MCF 10A (cell line): ENCODE measurements at regions of chr9 and their contacts with region 1.

Region 1: DNA sequence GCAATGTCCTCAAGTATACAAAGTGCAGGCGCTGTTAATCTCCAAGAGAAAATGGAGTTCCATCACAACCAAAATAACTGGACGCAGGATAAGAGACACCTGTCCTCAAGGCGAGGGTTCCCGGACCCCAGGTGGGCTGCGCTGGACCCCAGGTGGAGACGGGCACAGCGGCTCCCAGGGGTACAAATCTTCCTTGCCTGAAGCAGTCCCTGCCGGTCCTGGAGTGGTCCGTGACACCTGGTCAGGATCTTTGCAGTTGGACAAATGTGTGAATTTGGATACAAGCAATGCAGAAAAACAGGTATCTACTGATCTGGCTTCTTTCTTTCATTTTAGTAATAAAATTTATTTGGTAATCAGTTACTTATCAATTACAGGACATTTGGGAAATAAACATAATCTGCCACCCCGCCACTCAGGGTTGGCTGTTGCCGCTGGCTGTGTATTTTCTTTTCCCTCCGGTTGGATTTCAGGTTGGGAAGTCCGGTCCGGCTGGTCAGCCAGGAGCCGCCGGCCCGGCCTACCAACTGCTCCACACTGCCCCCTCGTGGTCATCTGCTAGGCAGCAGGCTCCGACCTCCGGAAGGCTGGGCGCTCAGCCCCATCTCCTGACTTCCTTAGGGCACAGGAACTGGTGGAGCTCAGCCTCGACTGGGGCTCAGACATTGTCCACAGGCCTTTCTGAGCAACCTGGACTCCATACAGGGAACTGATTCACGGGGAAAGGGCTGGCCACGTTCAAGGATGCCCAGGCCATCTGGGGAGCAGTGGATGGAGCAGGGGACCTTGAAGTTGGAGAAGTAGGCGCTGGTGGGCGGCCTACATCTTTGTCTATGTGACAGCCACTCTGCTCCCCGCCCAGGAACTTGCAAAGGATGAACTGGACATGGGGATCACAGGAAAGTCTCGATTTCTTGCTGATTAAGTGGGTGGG is 43.4 kb downstream of the NXNL2 start:
- DNase-seq: peak; percentile 79
- H3K4me3 Mint-ChIP-seq: peak overlapping the region; percentile 61
- H3K27ac Mint-ChIP-seq: no peak overlapping the region
- H3K4me1 Mint-ChIP-seq: peaks cover 21% of the 10 kb centered on the region
- H3K27me3 Mint-ChIP-seq: no peaks in the 10 kb centered on the region
- CTCF ChIP-seq: peak; percentile 89

Region 2: DNA sequence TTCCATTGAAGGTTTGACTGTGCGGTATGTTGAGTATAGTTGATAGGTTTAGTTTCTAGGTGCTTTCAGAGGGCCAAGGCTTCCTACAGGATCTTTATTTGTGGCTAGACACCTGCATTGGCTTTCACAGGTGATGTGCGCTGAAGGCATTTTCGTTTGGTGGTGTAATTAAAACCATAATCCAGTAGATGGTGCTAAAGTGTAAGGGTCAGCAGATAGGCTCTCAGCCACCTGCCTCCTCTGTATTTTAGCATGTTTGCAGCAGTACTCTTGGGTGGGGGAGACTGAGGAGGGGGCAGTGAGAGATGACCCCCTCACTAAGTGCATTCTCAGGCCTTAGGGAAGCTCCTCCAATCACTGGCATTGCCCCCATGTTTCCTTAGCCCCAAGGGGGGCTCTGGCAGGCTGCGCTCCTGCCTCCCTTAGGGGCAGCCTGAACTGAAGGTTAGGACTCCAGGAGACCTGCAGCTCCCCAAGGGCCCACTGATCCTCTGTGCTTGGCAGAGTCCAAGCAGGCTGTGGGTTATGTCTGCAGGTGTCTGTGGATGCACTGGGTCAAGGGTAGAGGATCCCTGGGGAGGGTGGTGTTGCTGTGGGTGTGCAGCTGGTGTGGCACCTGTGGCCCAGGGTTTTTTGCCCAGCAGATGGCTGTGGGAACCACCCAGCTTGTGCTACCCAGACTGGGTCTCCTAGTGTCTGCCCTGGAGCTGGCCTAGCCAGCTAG is 627.5 kb before region 1 on chr9:
- CTCF ChIA-PET with region 1: interaction called, 21 read pairs
- POLR2A ChIA-PET with region 1: no interaction called
- intact Hi-C with region 1: loop called (anchors 2 kb)
- DNase-seq: peak; percentile 56
- H3K4me3 Mint-ChIP-seq: no peak overlapping the region
- H3K27ac Mint-ChIP-seq: no peak overlapping the region
- H3K4me1 Mint-ChIP-seq: no peaks in the 10 kb centered on the region
- H3K27me3 Mint-ChIP-seq: no peaks in the 10 kb centered on the region
- CTCF ChIP-seq: peak; percentile 75

Region 3: DNA sequence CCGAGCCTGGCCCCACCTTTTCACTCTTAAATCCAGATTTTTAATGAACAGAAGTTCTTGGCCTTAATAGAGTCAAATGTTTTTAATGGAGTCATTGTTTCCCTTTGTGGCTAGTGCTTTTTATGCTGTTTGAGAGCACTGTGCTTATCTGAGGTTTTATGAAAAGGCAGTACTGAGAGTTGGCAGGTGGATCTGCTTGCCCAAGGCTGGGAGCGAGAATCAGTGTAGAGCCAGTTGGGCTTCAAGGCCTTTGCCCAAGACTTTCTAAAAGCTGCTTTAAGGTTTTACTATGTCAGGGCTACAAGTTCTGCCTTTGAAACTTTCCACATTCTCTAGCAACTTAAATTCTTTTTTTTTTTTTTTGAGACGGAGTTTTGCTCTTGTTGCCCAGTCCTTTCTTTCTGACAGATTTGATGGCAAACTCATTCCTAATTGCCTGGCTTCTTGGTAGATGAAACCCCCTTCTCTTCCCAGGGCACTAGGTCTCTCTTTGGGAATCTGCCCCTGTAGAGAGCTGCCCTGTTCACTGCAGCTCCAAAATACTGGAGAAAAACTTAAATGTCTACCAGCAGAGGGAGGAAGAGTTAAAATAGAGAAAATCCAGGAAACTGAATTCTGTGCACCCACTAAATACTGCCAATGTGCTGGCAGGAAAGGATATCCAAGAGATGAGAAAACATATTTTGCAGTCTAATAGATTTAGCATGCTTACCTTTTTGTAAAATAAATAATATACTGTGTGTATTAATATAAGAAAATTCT is 567.2 kb before region 1 on chr9:
- CTCF ChIA-PET with region 1: no interaction called
- POLR2A ChIA-PET with region 1: no interaction called
- intact Hi-C with region 1: loop called (anchors 5 kb)
- DNase-seq: peak; percentile 23
- H3K4me3 Mint-ChIP-seq: no peak overlapping the region
- H3K27ac Mint-ChIP-seq: no peak overlapping the region
- H3K4me1 Mint-ChIP-seq: no peaks in the 10 kb centered on the region
- H3K27me3 Mint-ChIP-seq: no peaks in the 10 kb centered on the region
- CTCF ChIP-seq: peak; percentile 31

Region 4: GRCh38 chr9:88106491-88106890 is 471.9 kb before region 1 on chr9:
- CTCF ChIA-PET with region 1: interaction called, 6 read pairs
- POLR2A ChIA-PET with region 1: no interaction called
- intact Hi-C with region 1: loop called (anchors 1 kb)
- DNase-seq: peak; percentile 54
- H3K4me3 Mint-ChIP-seq: no peak overlapping the region
- H3K27ac Mint-ChIP-seq: no peak overlapping the region
- H3K4me1 Mint-ChIP-seq: no peaks in the 10 kb centered on the region
- H3K27me3 Mint-ChIP-seq: peaks cover 10% of the 10 kb centered on the region
- CTCF ChIP-seq: peak; percentile 51

Region 5: GRCh38 chr9:88173378-88173999 is 404.9 kb before region 1 on chr9:
- CTCF ChIA-PET with region 1: no interaction called
- POLR2A ChIA-PET with region 1: no interaction called
- intact Hi-C with region 1: loop called (anchors 1 kb)
- DNase-seq: peak; percentile 87
- H3K4me3 Mint-ChIP-seq: no peak overlapping the region
- H3K27ac Mint-ChIP-seq: no peak overlapping the region
- H3K4me1 Mint-ChIP-seq: peaks cover 5% of the 10 kb centered on the region
- H3K27me3 Mint-ChIP-seq: peaks cover 33% of the 10 kb centered on the region
- CTCF ChIP-seq: peak; percentile 85

Region 6: GRCh38 chr9:88468226-88468625 is 110.2 kb before region 1 on chr9:
- CTCF ChIA-PET with region 1: no interaction called
- POLR2A ChIA-PET with region 1: no interaction called
- intact Hi-C with region 1: no loop called
- DNase-seq: no peak
- H3K4me3 Mint-ChIP-seq: no peak overlapping the region
- H3K27ac Mint-ChIP-seq: no peak overlapping the region
- H3K4me1 Mint-ChIP-seq: peaks cover 12% of the 10 kb centered on the region
- H3K27me3 Mint-ChIP-seq: no peaks in the 10 kb centered on the region
- CTCF ChIP-seq: no peak

Region 7: GRCh38 chr9:88628114-88628513 is 49.7 kb after region 1 on chr9:
- CTCF ChIA-PET with region 1: no interaction called
- POLR2A ChIA-PET with region 1: no interaction called
- intact Hi-C with region 1: no loop called
- DNase-seq: no peak
- H3K4me3 Mint-ChIP-seq: no peak overlapping the region
- H3K27ac Mint-ChIP-seq: no peak overlapping the region
- H3K4me1 Mint-ChIP-seq: no peaks in the 10 kb centered on the region
- H3K27me3 Mint-ChIP-seq: no peaks in the 10 kb centered on the region
- CTCF ChIP-seq: no peak

Region 8: GRCh38 chr9:88672874-88673689 is 94.7 kb after region 1 on chr9:
- CTCF ChIA-PET with region 1: no interaction called
- POLR2A ChIA-PET with region 1: no interaction called
- intact Hi-C with region 1: no loop called
- DNase-seq: no peak
- H3K4me3 Mint-ChIP-seq: no peak overlapping the region
- H3K27ac Mint-ChIP-seq: no peak overlapping the region
- H3K4me1 Mint-ChIP-seq: no peaks in the 10 kb centered on the region
- H3K27me3 Mint-ChIP-seq: no peaks in the 10 kb centered on the region
- CTCF ChIP-seq: no peak